ENCODE measurements at regions of chr12 and their contacts with region 1.

Region 1: DNA sequence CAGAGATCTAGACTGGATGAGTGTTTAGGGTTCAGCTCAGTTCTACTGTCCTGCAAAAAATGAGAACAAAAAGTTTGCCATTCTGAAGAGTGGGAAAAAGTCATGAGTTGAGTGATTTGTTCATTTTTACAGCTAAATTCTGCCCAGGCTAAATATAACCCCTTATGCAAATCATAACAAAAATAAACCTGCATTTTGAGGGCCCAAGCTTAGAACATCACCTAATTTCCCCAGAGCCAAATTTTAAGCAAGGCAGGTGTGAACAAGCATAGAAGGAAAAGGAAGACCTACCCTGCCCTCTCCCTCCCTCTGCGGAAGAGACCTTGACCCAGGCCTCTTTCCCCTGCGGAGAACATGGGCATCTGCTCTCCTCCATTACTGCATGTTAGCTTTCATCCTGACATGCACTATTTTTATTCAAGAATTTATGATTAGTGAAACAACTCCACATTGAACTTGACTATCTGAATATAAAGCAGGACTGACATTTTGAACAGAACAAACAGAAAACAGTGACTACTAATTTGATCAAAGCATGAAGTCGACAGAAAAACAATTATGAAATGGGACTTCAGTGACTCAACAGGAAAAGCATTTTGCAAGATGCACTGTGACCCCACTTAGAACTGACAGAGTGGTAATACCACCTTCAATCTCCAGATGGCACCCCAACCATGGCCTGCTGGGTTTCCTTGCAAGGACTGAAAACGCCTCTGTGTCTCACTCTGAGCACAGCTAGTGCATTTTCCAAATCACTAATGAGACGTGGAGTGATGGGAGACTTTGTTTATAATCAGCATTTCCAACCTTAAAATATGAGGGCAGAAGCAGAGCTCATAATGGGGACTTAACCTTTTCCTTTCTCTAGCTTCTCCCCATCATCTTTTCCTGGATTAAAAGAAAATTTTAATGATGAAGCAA is 30.9 kb upstream of the SELPLG start:
- DNase-seq: peak; percentile 90
- H3K4me3 ChIP-seq: no peak overlapping the region
- H3K27ac ChIP-seq: peak overlapping the region; percentile 75
- H3K4me1 ChIP-seq: peaks cover 21% of the 10 kb centered on the region
- H3K27me3 ChIP-seq: no peaks in the 10 kb centered on the region
- CTCF ChIP-seq: peak; percentile 97 to 98

Region 2: GRCh38 chr12:108691175-108691997 is 26.8 kb after region 1 on chr12:
- CTCF ChIA-PET with region 1: no interaction called
- dilution Hi-C with region 1: no loop called
- in situ Hi-C with region 1: no loop called
- intact Hi-C with region 1: loop called (anchors 1 kb)
- DNase-seq: peak; percentile 100
- H3K4me3 ChIP-seq: peak overlapping the region; percentile 1 to 35 (median 6)
- H3K27ac ChIP-seq: peak overlapping the region; percentile 99
- H3K4me1 ChIP-seq: peaks cover 62% of the 10 kb centered on the region
- H3K27me3 ChIP-seq: no peaks in the 10 kb centered on the region
- CTCF ChIP-seq: peak; percentile 41 to 44

Region 3: DNA sequence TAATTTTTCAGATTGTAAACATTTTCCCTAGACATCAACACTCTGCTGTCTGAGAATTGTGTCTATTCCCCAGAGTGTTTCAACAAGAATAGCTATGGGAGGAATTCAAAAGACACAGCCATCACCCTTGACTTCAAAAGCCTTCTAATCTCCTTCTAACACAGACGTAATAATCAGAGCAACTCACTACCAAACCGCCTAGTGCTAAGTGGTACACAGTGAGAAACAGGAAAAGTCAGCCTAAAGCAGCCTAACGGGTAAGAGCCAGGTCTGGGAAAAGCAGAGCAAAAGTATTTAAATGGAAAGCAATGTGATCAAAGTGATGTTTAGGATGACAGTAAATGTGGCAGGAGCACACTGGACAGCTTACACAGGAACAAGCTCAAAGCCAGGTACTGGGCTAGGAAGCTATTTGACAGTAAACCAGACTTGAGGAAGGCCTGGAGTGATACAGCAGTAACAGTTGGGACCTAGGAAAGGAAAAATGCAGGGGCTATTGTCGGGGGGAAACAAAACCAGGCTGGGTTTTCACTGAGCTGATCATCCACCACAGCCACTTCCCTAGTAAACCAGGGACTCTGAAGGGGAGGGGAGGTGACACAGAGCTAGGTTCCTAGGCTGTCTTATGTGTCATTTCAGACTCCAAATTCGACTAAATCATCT is 37.3 kb after region 1 on chr12:
- CTCF ChIA-PET with region 1: no interaction called
- dilution Hi-C with region 1: loop called (anchors 5 kb)
- in situ Hi-C with region 1: no loop called
- intact Hi-C with region 1: no loop called
- DNase-seq: peak; percentile 45
- H3K4me3 ChIP-seq: peak overlapping the region in 2 of 3 experiments; percentile 25 to 28
- H3K27ac ChIP-seq: peak overlapping the region; percentile 96
- H3K4me1 ChIP-seq: peaks cover 42% of the 10 kb centered on the region
- H3K27me3 ChIP-seq: no peaks in the 10 kb centered on the region
- CTCF ChIP-seq: no peak

Region 4: DNA sequence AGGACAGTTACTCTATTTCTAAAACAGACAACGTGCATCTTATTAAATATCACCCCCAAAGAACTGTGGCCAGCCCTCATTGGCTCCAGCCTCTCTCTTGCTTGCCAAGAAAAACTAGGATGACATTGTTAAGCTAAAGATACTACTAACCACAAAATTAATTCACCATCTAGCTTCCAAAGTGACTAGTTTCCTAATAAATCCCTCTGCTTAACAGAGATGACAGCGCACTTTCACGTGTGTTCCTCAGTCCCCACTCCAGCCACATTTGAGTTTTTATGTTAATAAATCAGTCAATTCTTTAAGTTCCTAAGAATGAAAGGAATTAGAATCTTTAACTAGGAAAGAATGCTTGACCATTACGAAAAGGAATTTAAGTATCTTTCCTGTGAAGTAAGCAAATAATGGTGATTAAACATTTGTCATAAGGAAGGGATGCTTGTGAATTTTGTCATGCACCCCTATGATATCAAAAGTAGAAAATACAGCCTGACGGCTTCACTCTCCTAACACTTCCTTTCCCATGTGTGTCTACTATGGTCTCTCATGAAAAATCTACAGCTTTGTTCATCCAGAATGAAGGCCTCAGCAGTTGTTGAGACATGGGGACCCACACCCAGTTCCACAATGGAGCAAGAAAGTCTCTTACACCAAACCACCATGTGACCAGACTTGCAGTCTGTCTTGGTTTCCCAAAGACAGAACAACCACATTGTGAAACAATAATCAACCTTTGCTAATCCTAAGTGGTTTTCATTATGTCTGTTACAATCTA is 58.6 kb after region 1 on chr12:
- CTCF ChIA-PET with region 1: interaction called, 5 read pairs
- dilution Hi-C with region 1: loop called (anchors 10 kb)
- in situ Hi-C with region 1: no loop called
- intact Hi-C with region 1: no loop called
- DNase-seq: peak; percentile 75
- H3K4me3 ChIP-seq: no peak overlapping the region
- H3K27ac ChIP-seq: peak overlapping the region; percentile 85
- H3K4me1 ChIP-seq: peaks cover 60% of the 10 kb centered on the region
- H3K27me3 ChIP-seq: no peaks in the 10 kb centered on the region
- CTCF ChIP-seq: no peak

Region 5: GRCh38 chr12:108773798-108774788 is 109.5 kb after region 1 on chr12:
- CTCF ChIA-PET with region 1: interaction called, 3 read pairs
- dilution Hi-C with region 1: no loop called
- in situ Hi-C with region 1: no loop called
- intact Hi-C with region 1: loop called (anchors 1 kb)
- DNase-seq: peak; percentile 91
- H3K4me3 ChIP-seq: no peak overlapping the region
- H3K27ac ChIP-seq: peak overlapping the region; percentile 59
- H3K4me1 ChIP-seq: peaks cover 20% of the 10 kb centered on the region
- H3K27me3 ChIP-seq: no peaks in the 10 kb centered on the region
- CTCF ChIP-seq: no peak

Region 6: GRCh38 chr12:108856428-108857157 is 192.0 kb after region 1 on chr12:
- CTCF ChIA-PET with region 1: no interaction called
- dilution Hi-C with region 1: no loop called
- in situ Hi-C with region 1: no loop called
- intact Hi-C with region 1: loop called (anchors 2 kb)
- DNase-seq: peak; percentile 73
- H3K4me3 ChIP-seq: peak overlapping the region; percentile 83 to 94 (median 91)
- H3K27ac ChIP-seq: peak overlapping the region; percentile 97
- H3K4me1 ChIP-seq: peaks cover 28% of the 10 kb centered on the region
- H3K27me3 ChIP-seq: no peaks in the 10 kb centered on the region
- CTCF ChIP-seq: no peak